ENCODE measurements at regions of chr5 and their contacts with region 1.

Region 1: DNA sequence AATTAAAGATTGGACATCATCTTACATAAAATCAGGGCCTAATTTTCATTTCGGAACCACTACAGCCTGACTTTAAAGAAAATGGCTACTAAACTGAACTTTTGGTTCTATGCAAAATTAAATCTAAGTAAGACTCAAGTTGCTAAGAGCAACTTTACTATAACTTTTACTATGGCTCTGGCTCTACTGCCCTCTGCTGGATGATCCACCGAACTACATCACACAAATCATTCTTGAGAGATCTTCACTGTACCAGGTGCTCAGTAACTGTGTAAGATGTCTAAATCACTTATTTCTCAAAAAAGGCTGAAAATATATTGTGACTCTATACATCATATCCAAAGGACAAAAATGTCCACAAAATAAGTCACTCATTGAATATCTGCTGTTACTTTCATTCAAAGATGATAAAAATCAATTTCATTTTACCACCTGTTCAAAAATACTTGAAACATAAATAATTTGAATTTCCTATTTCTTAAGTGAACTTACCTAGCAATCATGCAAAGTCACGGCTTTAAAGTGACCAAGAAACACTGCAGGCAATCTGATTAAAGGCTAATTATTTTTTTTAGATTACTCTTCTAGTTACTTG is 13.5 kb downstream of the MOCS2 start:
- DNase-seq: no peak
- H3K4me3 ChIP-seq: no peak overlapping the region
- H3K27ac ChIP-seq: peak overlapping the region in 1 of 4 donors; percentile 2
- H3K4me1 ChIP-seq: peaks cover 6 to 47% (median 33%) of the 10 kb centered on the region in 4 donors
- H3K27me3 ChIP-seq: no peaks in the 10 kb centered on the region
- CTCF ChIP-seq: peak; percentile 85 to 93 (median 90)
- EP300 ChIP-seq: no peak
- POLR2A ChIP-seq: no peak

Region 2: GRCh38 chr5:52950686-52951085 is 145.3 kb before region 1 on chr5:
- intact Hi-C with region 1: loop called (anchors 2 kb)
- DNase-seq: no peak
- H3K4me3 ChIP-seq: no peak overlapping the region
- H3K27ac ChIP-seq: peak overlapping the region; percentile 75 to 80 (median 76)
- H3K4me1 ChIP-seq: peaks cover 7 to 60% (median 56%) of the 10 kb centered on the region in 4 donors
- H3K27me3 ChIP-seq: no peaks in the 10 kb centered on the region
- CTCF ChIP-seq: no peak
- EP300 ChIP-seq: no peak
- POLR2A ChIP-seq: no peak

Region 3: GRCh38 chr5:53035868-53036381 is 60.1 kb before region 1 on chr5:
- intact Hi-C with region 1: loop called (anchors 10 kb)
- DNase-seq: no peak
- H3K4me3 ChIP-seq: no peak overlapping the region
- H3K27ac ChIP-seq: no peak overlapping the region
- H3K4me1 ChIP-seq: peaks cover 30 to 35% (median 32%) of the 10 kb centered on the region in 4 donors
- H3K27me3 ChIP-seq: no peaks in the 10 kb centered on the region
- CTCF ChIP-seq: peak in 1 of 3 experiments; percentile 14
- EP300 ChIP-seq: no peak
- POLR2A ChIP-seq: no peak

Region 4: DNA sequence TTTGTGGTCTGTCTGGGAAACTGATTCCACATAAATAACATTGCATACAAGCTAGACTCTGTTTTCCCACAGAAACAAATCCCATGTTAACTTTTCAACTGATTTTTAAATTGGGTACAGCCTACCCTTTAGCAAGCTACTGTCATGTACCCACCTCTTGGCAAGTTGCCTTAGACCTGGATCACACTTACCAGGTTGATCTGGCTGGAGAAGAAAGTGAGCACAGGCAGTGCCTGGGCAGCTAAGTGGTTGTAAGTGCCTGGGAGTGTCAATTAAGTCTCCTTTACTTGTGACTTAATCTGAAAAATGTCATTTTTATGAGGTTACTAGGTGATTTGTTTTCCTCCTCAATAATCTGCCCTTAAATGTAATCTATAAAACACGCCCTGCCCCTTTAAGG is 878.0 kb after region 1 on chr5:
- intact Hi-C with region 1: no loop called
- DNase-seq: no peak
- H3K4me3 ChIP-seq: no peak overlapping the region
- H3K27ac ChIP-seq: no peak overlapping the region
- H3K4me1 ChIP-seq: peaks cover 0 to 16% (median 3%) of the 10 kb centered on the region in 4 donors
- H3K27me3 ChIP-seq: no peaks in the 10 kb centered on the region
- CTCF ChIP-seq: no peak
- EP300 ChIP-seq: no peak
- POLR2A ChIP-seq: no peak

Measured in esophagus muscularis mucosa (tissue), 4 donors.